Transverse colon (tissue), 4 donors: ENCODE measurements at regions of chr10 and their contacts with region 1.

Region 1: DNA sequence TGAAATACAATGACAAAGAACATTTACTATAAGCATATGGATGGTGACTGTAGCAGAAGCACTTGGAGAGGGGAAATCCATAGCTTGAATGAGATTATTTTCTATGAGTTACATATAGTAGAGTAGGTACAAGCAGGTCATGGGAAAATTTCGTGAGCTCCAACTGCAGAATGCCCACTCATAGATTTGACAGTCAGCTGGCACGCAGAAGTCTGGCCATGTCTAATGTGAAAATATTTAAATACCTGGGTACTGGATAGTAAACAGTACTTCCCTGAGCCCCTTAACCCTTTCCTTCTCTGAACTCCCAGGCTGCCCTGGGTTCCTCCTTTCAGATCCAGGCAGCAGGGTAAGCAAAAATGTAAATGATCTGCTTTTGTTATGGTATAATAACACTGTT is 209.7 kb downstream of the OTUD1 start:
- DNase-seq: no peak
- H3K4me3 ChIP-seq: no peak overlapping the region
- H3K27ac ChIP-seq: no peak overlapping the region
- H3K4me1 ChIP-seq: no peaks in the 10 kb centered on the region
- H3K27me3 ChIP-seq: no peaks in the 10 kb centered on the region
- CTCF ChIP-seq: no peak
- EP300 ChIP-seq: no peak
- POLR2A ChIP-seq: no peak

Region 2: GRCh38 chr10:23525406-23525805 is 123.2 kb before region 1 on chr10:
- in situ Hi-C with region 1: no loop called
- intact Hi-C with region 1: no loop called
- DNase-seq: peak; percentile 19
- H3K4me3 ChIP-seq: no peak overlapping the region
- H3K27ac ChIP-seq: no peak overlapping the region
- H3K4me1 ChIP-seq: no peaks in the 10 kb centered on the region
- H3K27me3 ChIP-seq: no peaks in the 10 kb centered on the region
- CTCF ChIP-seq: peak; percentile 42 to 54 (median 46)
- EP300 ChIP-seq: no peak
- POLR2A ChIP-seq: no peak

Region 3: GRCh38 chr10:23613900-23614299 is 34.7 kb before region 1 on chr10:
- in situ Hi-C with region 1: no loop called
- intact Hi-C with region 1: loop called (anchors 1 kb)
- DNase-seq: no peak
- H3K4me3 ChIP-seq: no peak overlapping the region
- H3K27ac ChIP-seq: no peak overlapping the region
- H3K4me1 ChIP-seq: no peaks in the 10 kb centered on the region
- H3K27me3 ChIP-seq: no peaks in the 10 kb centered on the region
- CTCF ChIP-seq: no peak
- EP300 ChIP-seq: no peak
- POLR2A ChIP-seq: no peak